HCT116 (cell line): ENCODE measurements at regions of chr1 and their contacts with region 1.

Region 1: DNA sequence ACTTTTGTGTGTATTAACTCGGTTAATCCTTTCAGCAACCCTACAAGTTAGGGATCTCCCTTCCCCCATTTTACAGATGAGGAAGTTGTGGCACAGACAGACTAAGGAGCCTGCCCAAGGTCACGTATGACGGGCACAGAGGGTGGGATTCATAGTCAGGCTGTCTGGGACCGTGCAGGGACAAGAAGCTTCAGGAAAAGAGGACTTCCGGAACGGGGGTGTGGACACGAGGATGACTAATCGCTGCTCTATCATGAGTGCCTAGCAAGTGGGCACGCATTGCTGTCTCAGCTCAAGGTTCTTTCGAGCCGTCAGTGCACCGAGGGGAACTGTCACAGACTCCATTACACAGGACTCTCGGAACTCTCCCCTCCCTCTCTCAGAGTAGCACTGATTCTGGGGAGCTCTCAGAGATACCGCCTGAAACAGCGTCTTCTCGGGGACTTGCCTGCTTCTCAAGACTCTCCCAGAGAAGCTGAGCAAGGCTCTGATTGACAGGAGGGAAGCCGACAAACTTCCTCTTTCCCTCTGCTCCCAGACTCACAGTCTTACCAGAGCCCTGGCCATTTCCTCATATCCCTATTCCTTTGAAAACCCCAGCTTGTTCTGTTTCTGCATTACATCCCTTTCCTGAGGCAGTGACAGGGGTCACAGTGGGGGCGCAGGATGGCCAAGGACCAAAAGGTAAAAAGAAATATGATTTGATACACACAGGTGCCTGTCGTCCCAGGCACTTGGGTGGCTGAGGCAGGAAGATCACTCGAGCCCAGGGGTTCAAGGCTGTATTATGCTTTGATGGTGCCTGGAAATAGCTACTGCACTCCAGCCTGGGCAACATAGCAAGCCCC is 14.4 kb downstream of the FHAD1 start:
- DNase-seq: peak; percentile 57
- ATAC-seq: peak; percentile 76
- H3K4me3 ChIP-seq: peak overlapping the region; percentile 37 to 56
- H3K27ac ChIP-seq: peak overlapping the region; percentile 62
- H3K4me1 ChIP-seq: peaks cover 22 to 40% of the 10 kb centered on the region in 2 experiments
- H3K27me3 ChIP-seq: no peaks in the 10 kb centered on the region
- CTCF ChIP-seq: no peak
- POLR2A ChIP-seq: no peak
- RAD21 ChIP-seq: no peak

Region 2: DNA sequence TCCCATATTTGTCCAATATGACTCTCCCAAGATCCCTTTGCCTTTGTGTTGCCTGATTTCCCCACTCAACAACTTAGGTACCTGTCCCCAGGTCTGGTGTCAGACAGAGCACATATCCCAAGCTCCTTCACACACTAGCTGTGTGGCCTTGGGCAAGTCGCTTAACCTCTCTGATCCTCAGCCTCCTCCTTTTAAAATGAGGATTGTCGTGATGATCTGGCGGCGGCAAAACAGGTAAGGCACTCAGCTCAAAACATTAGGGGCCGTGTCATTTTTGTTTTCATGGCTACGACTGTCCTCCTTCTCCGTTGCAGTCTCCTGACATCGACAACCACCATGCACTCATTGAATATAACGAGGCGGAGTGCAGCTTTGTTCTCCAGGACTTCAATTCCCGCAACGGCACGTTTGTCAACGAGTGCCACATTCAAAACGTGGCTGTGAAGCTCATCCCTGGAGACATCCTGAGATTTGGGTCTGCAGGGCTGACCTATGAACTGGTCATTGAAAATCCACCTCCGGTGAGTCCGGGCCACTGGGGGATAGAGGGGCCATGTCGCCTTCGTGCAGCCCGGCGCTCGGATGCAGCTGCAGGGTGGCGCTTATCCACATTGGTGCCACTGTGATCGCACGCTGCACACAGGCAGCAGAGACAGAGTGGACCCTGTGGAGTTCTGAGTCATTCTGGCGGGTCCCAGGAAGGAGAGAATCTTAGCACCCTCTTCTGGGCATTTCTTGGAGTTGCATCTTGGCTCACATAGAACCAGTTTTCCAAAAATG is 10.8 kb after region 1 on chr1:
- CTCF ChIA-PET with region 1: interaction called, 16 read pairs
- POLR2A ChIA-PET with region 1: no interaction called
- RAD21 ChIA-PET with region 1: no interaction called
- intact Hi-C with region 1: no loop called
- DNase-seq: peak; percentile 66
- ATAC-seq: peak; percentile 97
- H3K4me3 ChIP-seq: no peak overlapping the region
- H3K27ac ChIP-seq: no peak overlapping the region
- H3K4me1 ChIP-seq: peaks cover 0 to 13% of the 10 kb centered on the region in 2 experiments; a peak in 2 of 4 replicates
- H3K27me3 ChIP-seq: no peaks in the 10 kb centered on the region
- CTCF ChIP-seq: peak; percentile 81 to 94 (median 84)
- POLR2A ChIP-seq: no peak
- RAD21 ChIP-seq: peak; percentile 99

Region 3: GRCh38 chr1:15283526-15283925 is 22.1 kb after region 1 on chr1:
- CTCF ChIA-PET with region 1: no interaction called
- POLR2A ChIA-PET with region 1: no interaction called
- RAD21 ChIA-PET with region 1: no interaction called
- intact Hi-C with region 1: no loop called
- DNase-seq: no peak
- ATAC-seq: peak; percentile 80
- H3K4me3 ChIP-seq: no peak overlapping the region
- H3K27ac ChIP-seq: no peak overlapping the region
- H3K4me1 ChIP-seq: peaks cover 0 to 13% of the 10 kb centered on the region in 2 experiments; a peak in 2 of 4 replicates
- H3K27me3 ChIP-seq: no peaks in the 10 kb centered on the region
- CTCF ChIP-seq: peak in 2 of 3 experiments; percentile 27 to 38; a peak in 3 of 6 replicates
- POLR2A ChIP-seq: no peak
- RAD21 ChIP-seq: no peak